MCF 10A (cell line): ENCODE measurements at regions of chr4 and their contacts with region 1.

Region 1: DNA sequence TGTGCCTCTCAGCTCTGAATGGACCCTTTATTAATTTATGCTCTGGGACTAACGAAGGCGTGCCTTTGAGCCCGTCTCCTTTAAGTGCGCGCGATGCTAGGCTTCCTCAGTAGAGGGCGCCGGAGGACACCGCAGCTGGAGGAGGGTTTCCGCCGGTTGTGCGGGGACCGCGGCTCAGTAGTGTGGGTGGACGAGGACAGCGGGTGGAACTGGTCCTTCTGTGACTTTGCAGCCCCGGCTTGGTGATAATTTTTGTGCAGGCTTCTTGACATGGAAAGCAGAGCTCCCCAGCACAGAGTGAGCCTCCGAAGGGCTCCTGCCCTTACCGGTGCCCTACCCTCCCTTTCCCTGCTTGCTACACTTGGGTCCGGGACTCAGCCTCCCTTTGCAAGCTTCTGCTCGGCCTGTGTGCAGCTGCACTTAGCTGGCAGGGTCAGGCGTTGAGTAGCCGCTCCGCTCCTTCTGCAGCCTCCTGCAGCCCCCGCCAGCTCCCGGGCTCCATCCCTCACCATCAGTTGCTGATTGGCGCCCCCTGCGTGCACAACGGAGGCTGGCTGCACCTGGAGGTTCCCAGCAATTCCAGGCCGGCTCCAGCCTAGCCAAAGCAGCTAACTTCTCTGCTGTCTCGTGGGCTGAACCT is 26.8 kb upstream of the BOD1L1 start:
- DNase-seq: peak; percentile 78
- H3K4me3 Mint-ChIP-seq: peak overlapping the region; percentile 72
- H3K27ac Mint-ChIP-seq: no peak overlapping the region
- H3K4me1 Mint-ChIP-seq: peaks cover 9% of the 10 kb centered on the region
- H3K27me3 Mint-ChIP-seq: no peaks in the 10 kb centered on the region
- CTCF ChIP-seq: peak; percentile 61

Region 2: GRCh38 chr4:13627606-13628301 is 26.5 kb before region 1 on chr4 and contains the start of gene BOD1L1:
- CTCF ChIA-PET with region 1: interaction called, 12 read pairs
- POLR2A ChIA-PET with region 1: interaction called, 16 read pairs
- intact Hi-C with region 1: no loop called
- DNase-seq: peak; percentile 91
- H3K4me3 Mint-ChIP-seq: peak within 1 kb of the TSS; percentile 89
- H3K27ac Mint-ChIP-seq: peak within 1 kb of the TSS; percentile 99
- H3K4me1 Mint-ChIP-seq: peaks cover 19% of the 10 kb centered on the region
- H3K27me3 Mint-ChIP-seq: no peaks in the 10 kb centered on the region
- CTCF ChIP-seq: peak; percentile 11
- total RNA-seq, gene BOD1L1: 46.8 and 55.4 TPM in 2 replicates

Region 3: DNA sequence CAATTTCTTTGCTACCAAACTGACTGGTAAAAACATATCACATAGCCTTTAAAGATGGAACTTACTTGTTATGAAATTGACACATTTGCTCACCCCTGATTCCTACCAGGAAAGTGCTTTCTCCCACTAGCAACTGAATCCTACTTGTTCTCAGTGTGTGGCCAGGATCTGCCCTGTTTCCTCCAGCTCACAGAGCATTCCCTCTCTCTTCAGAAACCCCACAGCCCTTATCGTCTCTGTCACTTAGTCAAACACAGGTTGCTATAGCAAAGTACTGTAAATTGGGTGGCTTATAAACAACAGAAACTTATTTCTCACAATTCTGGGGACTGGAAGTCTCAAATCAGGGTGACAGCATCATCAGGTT is 238.4 kb after region 1 on chr4:
- CTCF ChIA-PET with region 1: interaction called, 5 read pairs
- POLR2A ChIA-PET with region 1: no interaction called
- intact Hi-C with region 1: loop called (anchors 5 kb)
- DNase-seq: no peak
- H3K4me3 Mint-ChIP-seq: peak overlapping the region; percentile 25
- H3K27ac Mint-ChIP-seq: peak overlapping the region; percentile 96
- H3K4me1 Mint-ChIP-seq: peaks cover 46% of the 10 kb centered on the region
- H3K27me3 Mint-ChIP-seq: no peaks in the 10 kb centered on the region
- CTCF ChIP-seq: no peak

Region 4: GRCh38 chr4:13988353-13989305 is 334.4 kb after region 1 on chr4:
- CTCF ChIA-PET with region 1: interaction called, 5 read pairs
- POLR2A ChIA-PET with region 1: interaction called, 5 read pairs
- intact Hi-C with region 1: loop called (anchors 5 kb)
- DNase-seq: peak; percentile 98
- H3K4me3 Mint-ChIP-seq: peak overlapping the region; percentile 21
- H3K27ac Mint-ChIP-seq: peak overlapping the region; percentile 75
- H3K4me1 Mint-ChIP-seq: peaks cover 39% of the 10 kb centered on the region
- H3K27me3 Mint-ChIP-seq: peaks cover 13% of the 10 kb centered on the region
- CTCF ChIP-seq: no peak

Region 5: GRCh38 chr4:14726441-14727405 is 1072.4 kb after region 1 on chr4:
- CTCF ChIA-PET with region 1: no interaction called
- POLR2A ChIA-PET with region 1: no interaction called
- intact Hi-C with region 1: loop called (anchors 2 kb)
- DNase-seq: peak; percentile 86
- H3K4me3 Mint-ChIP-seq: peak overlapping the region; percentile 34
- H3K27ac Mint-ChIP-seq: peak overlapping the region; percentile 95
- H3K4me1 Mint-ChIP-seq: peaks cover 16% of the 10 kb centered on the region
- H3K27me3 Mint-ChIP-seq: no peaks in the 10 kb centered on the region
- CTCF ChIP-seq: no peak